Ascending aorta (tissue), 2 donors: ENCODE measurements at regions of chr18 and their contacts with region 1.

Region 1: GRCh38 chr18:44668270-44668975 is 12.3 kb upstream of the SETBP1 start:
- DNase-seq: no peak
- H3K4me3 ChIP-seq: no peak overlapping the region
- H3K27ac ChIP-seq: no peak overlapping the region
- H3K4me1 ChIP-seq: no peaks in the 10 kb centered on the region
- H3K27me3 ChIP-seq: no peaks in the 10 kb centered on the region
- CTCF ChIP-seq: no peak

Region 2: DNA sequence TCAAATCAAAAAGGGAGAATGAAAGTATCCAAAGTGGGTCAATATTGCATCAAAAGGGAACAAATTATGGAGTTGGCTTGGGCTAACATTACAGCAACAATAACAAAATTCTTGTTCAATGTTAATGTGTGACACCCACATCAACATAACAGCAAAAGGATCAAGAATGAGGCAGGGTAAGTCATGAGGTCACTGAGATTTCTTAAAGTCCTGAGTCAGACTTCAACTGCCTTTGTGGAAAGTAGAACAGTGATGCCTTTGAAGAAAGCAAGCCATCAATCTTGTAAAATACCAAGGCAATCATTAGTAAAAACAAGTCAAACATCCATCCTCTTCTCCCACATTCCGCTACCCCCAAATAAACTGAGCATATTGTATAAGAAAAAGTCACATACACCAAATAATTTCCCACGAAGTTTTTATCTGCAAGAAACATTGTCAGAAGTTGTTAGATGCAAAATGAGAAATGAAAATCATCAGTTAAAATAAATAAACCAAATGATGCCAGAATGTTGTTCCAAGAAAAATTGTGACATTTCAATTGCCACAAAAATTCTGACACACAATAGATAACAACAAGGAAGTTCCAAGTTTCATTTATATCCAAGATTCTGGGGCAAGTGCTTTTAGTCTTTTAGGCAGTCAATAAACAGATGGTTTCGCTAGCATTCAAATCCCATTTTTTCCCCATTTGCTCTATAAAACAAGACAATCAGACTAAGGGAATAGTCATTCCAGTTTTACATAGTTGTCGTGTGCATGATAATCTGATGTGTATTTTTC is 203.8 kb before region 1 on chr18:
- intact Hi-C with region 1: loop called (anchors 10 kb)
- DNase-seq: no peak
- H3K4me3 ChIP-seq: no peak overlapping the region
- H3K27ac ChIP-seq: no peak overlapping the region
- H3K4me1 ChIP-seq: no peaks in the 10 kb centered on the region
- H3K27me3 ChIP-seq: no peaks in the 10 kb centered on the region
- CTCF ChIP-seq: no peak

Region 3: GRCh38 chr18:44744161-44745121 is 76.0 kb after region 1 on chr18:
- intact Hi-C with region 1: no loop called
- DNase-seq: no peak
- H3K4me3 ChIP-seq: peak overlapping the region in 1 of 2 donors; percentile 44
- H3K27ac ChIP-seq: no peak overlapping the region
- H3K4me1 ChIP-seq: peaks cover 0 to 17% of the 10 kb centered on the region in 2 donors
- H3K27me3 ChIP-seq: no peaks in the 10 kb centered on the region
- CTCF ChIP-seq: peak in 1 of 3 experiments; percentile 4